ENCODE measurements at regions of chr2 and their contacts with region 1.

Region 1: GRCh38 chr2:7517088-7517487 is 599.9 kb downstream of the RNF144A start:
- DNase-seq: no peak
- H3K4me3 ChIP-seq: no peak overlapping the region
- H3K27ac ChIP-seq: no peak overlapping the region
- H3K4me1 ChIP-seq: no peaks in the 10 kb centered on the region
- H3K27me3 ChIP-seq: peaks cover 2% of the 10 kb centered on the region
- CTCF ChIP-seq: no peak

Region 2: GRCh38 chr2:7665880-7666279 is 148.8 kb after region 1 on chr2:
- CTCF ChIA-PET with region 1: no interaction called
- dilution Hi-C with region 1: no loop called
- in situ Hi-C with region 1: no loop called
- intact Hi-C with region 1: loop called (anchors 10 kb)
- DNase-seq: no peak
- H3K4me3 ChIP-seq: no peak overlapping the region
- H3K27ac ChIP-seq: no peak overlapping the region
- H3K4me1 ChIP-seq: no peaks in the 10 kb centered on the region
- H3K27me3 ChIP-seq: no peaks in the 10 kb centered on the region
- CTCF ChIP-seq: no peak

Region 3: GRCh38 chr2:7943446-7943845 is 426.4 kb after region 1 on chr2:
- CTCF ChIA-PET with region 1: no interaction called
- dilution Hi-C with region 1: no loop called
- in situ Hi-C with region 1: no loop called
- intact Hi-C with region 1: no loop called
- DNase-seq: no peak
- H3K4me3 ChIP-seq: no peak overlapping the region
- H3K27ac ChIP-seq: no peak overlapping the region
- H3K4me1 ChIP-seq: no peaks in the 10 kb centered on the region
- H3K27me3 ChIP-seq: no peaks in the 10 kb centered on the region
- CTCF ChIP-seq: no peak

Measured in mammary epithelial cell (primary cell).